ENCODE measurements at regions of chr1 and their contacts with region 1.

Region 1: GRCh38 chr1:37890378-37891014 is 31.1 kb upstream of the MTF1 start:
- DNase-seq: peak in 1 of 2 donors; percentile 64
- ATAC-seq: peak; percentile 46 to 76 (median 75)
- H3K4me3 ChIP-seq: no peak overlapping the region
- H3K4me3 Mint-ChIP-seq: peak overlapping the region; percentile 32
- H3K27ac ChIP-seq: peak overlapping the region; percentile 30
- H3K27ac Mint-ChIP-seq: peak overlapping the region; percentile 54 to 85
- H3K4me1 ChIP-seq: no peaks in the 10 kb centered on the region
- H3K4me1 Mint-ChIP-seq: peaks cover 13 to 14% of the 10 kb centered on the region in 2 donors
- H3K27me3 ChIP-seq: no peaks in the 10 kb centered on the region
- H3K27me3 Mint-ChIP-seq: no peaks in the 10 kb centered on the region
- CTCF ChIP-seq: peak; percentile 66

Region 2: GRCh38 chr1:37978541-37978940 is 88.0 kb after region 1 on chr1:
- intact Hi-C with region 1: loop called (anchors 1 kb)
- DNase-seq: no peak
- ATAC-seq: no peak
- H3K4me3 ChIP-seq: no peak overlapping the region
- H3K4me3 Mint-ChIP-seq: no peak overlapping the region
- H3K27ac ChIP-seq: no peak overlapping the region
- H3K27ac Mint-ChIP-seq: no peak overlapping the region
- H3K4me1 ChIP-seq: no peaks in the 10 kb centered on the region
- H3K4me1 Mint-ChIP-seq: peaks cover 6 to 8% of the 10 kb centered on the region in 2 donors
- H3K27me3 ChIP-seq: no peaks in the 10 kb centered on the region
- H3K27me3 Mint-ChIP-seq: no peaks in the 10 kb centered on the region
- CTCF ChIP-seq: no peak

Region 3: DNA sequence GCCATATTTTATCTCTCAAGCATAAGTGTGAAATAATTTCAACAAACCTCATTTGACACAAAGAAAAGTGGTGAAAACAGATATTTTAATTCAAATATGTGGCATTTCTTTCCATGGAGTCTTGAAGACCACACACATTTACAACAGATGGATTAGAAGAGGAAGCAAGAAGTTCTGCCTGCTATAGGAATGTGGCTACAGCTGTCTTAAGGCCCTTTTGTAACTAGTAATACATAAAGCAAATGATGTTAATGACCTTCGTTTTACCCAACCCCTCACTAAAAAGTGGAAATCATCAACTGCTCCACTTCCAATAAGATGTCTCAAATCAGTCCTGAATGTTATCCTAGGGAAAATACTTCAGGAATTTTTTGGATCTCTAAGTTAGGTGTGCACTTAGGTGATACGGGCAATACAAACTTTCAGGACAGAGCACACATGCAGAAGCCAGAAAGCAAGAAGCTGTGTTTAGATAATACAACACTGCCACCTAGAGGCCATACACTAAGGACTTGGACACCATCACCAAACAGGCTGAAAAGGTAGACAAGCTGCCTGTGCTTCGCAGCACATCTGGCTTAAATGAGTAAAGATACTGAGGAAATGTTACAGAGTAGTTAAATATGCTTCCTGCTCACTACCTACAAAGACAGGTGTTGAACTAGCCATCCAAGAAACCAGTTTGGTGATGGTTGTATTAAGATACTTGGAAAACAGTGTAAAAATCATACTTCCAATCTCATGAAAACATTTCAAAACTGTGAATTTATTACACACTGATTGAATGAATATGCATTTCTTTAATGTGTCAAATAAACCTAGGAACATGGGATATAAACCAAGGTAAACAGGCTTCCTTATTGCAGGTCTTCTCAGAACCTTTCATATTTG is 944.7 kb after region 1 on chr1:
- intact Hi-C with region 1: loop called (anchors 5 kb)
- DNase-seq: peak in 1 of 2 donors; percentile 89
- ATAC-seq: peak; percentile 81 to 91 (median 88)
- H3K4me3 ChIP-seq: no peak overlapping the region
- H3K4me3 Mint-ChIP-seq: no peak overlapping the region
- H3K27ac ChIP-seq: no peak overlapping the region
- H3K27ac Mint-ChIP-seq: no peak overlapping the region
- H3K4me1 ChIP-seq: no peaks in the 10 kb centered on the region
- H3K4me1 Mint-ChIP-seq: peaks cover under 1 to 12% of the 10 kb centered on the region in 2 donors
- H3K27me3 ChIP-seq: no peaks in the 10 kb centered on the region
- H3K27me3 Mint-ChIP-seq: peaks cover 5 to 11% of the 10 kb centered on the region in 2 donors
- CTCF ChIP-seq: peak; percentile 84

Measured in natural killer cell (primary cell).